ENCODE measurements at regions of chr21 and their contacts with region 1.

Region 1: GRCh38 chr21:45152265-45152746 is 77.9 kb downstream of the ADARB1 start:
- DNase-seq: peak; percentile 61
- H3K4me3 Mint-ChIP-seq: peak overlapping the region; percentile 71
- H3K27ac Mint-ChIP-seq: peak overlapping the region; percentile 14
- H3K4me1 Mint-ChIP-seq: peaks cover 24% of the 10 kb centered on the region
- H3K27me3 Mint-ChIP-seq: no peaks in the 10 kb centered on the region

Region 2: DNA sequence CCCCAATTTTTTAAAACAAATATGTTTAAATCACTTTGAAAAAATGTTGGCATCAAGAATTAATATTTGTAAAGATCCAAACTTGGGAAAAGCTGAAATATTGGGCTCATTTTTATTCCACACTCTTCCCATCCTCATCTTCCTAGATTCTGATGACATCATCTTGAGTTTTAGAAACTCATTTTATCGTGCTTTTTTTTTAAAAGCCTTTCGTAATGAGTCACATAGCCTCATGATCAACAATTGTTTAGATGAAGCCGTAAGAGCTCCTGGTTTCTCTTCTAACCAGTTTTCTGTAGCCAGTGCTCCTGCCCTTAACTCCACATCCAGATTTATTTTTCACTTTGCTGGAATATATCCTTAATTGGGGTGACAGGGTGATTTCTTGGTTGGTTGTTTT is 56.7 kb after region 1 on chr21:
- intact Hi-C with region 1: no loop called
- DNase-seq: no peak
- H3K4me3 Mint-ChIP-seq: no peak overlapping the region
- H3K27ac Mint-ChIP-seq: no peak overlapping the region
- H3K4me1 Mint-ChIP-seq: peaks cover 35% of the 10 kb centered on the region
- H3K27me3 Mint-ChIP-seq: no peaks in the 10 kb centered on the region

Region 3: GRCh38 chr21:45439161-45439872 is 287.0 kb after region 1 on chr21:
- intact Hi-C with region 1: loop called (anchors 1 kb)
- DNase-seq: peak; percentile 77
- H3K4me3 Mint-ChIP-seq: peak overlapping the region; percentile 5
- H3K27ac Mint-ChIP-seq: peak overlapping the region; percentile 18
- H3K4me1 Mint-ChIP-seq: peaks cover 6% of the 10 kb centered on the region
- H3K27me3 Mint-ChIP-seq: no peaks in the 10 kb centered on the region

Measured in activated T-helper 1 cell treated with anti-CD3 and anti-CD28 coated beads, Interleukin-12 subunit alpha, Interleukin-12 subunit beta, Interleukin-2, Interleukin-4 antibody, amounts not matched to agents 30 ng/mL and 10 ng/mL and 1 ng/mL, durations not matched to agents 14 hours and 24 hours and 36 hours (primary cell).